Left cardiac atrium (tissue), 4 donors: ENCODE measurements at regions of chr2 and their contacts with region 1.

Region 1: GRCh38 chr2:157838442-157839161 is 37.5 kb downstream of the ACVR1 start:
- DNase-seq: peak; percentile 52
- ATAC-seq: peak; percentile 67 to 90

Region 2: DNA sequence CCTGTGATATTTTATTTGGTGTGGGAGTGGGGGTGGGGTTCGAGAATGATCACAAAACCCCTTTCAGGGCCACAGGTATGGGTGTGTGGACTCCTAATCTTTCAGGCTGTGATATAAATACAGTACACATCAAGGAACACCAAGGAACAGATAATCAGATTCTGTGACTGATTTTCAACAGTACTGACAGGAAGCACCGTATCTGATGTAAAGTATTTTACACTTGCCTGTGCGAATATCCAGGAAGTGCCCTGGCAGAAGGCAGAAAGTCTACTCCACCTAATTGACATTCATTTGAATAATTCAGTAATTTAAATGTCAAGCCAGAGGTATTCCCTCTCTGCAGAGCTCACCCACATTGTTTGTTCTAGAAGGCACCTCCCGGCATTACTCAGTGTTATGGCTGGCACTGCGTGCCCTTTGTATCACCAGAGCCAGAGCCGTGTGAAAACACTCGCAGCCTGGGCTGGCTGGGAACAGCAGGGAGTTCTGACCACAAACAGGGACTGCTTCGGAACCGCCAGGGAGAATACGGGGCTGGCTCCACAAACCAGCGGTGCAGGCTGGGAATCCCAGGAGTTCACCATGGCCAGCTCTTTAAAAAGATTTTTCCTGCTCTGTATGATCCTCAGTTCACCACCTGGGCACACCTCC is 54.3 kb before region 1 on chr2:
- intact Hi-C with region 1: loop called in 1 of 2 experiments (anchors 10 kb)
- DNase-seq: peak; percentile 67
- ATAC-seq: peak; percentile 62 to 70

Region 3: GRCh38 chr2:157952558-157952957 is 114.0 kb after region 1 on chr2:
- intact Hi-C with region 1: no loop called
- DNase-seq: no peak
- ATAC-seq: no peak